Panc1 (cell line): ENCODE measurements at regions of chr16 and their contacts with region 1.

Region 1: GRCh38 chr16:84294531-84295142 is at the start of gene WFDC1:
- DNase-seq: no peak
- ATAC-seq: peak; percentile 72; the same call in 1 of the 2 replicates
- H3K4me3 ChIP-seq: peak within 1 kb of the TSS in 1 of 2 experiments; percentile 24; a peak in 1 of 4 replicates
- H3K27ac ChIP-seq: no peak within 1 kb of the TSS
- H3K4me1 ChIP-seq: no peaks in the 10 kb centered on the region
- H3K27me3 ChIP-seq: no peaks in the 10 kb centered on the region
- CTCF ChIP-seq: no peak
- total RNA-seq, gene WFDC1: not detected

Region 2: GRCh38 chr16:83887081-83887480 is 407.6 kb before region 1 on chr16:
- CTCF ChIA-PET with region 1: no interaction called
- POLR2A ChIA-PET with region 1: no interaction called
- in situ Hi-C with region 1: no loop called
- intact Hi-C with region 1: no loop called
- DNase-seq: no peak
- ATAC-seq: no peak
- H3K4me3 ChIP-seq: no peak overlapping the region
- H3K27ac ChIP-seq: no peak overlapping the region
- H3K4me1 ChIP-seq: no peaks in the 10 kb centered on the region
- H3K27me3 ChIP-seq: no peaks in the 10 kb centered on the region
- CTCF ChIP-seq: peak; percentile 66

Region 3: GRCh38 chr16:83974475-83974874 is 320.2 kb before region 1 on chr16:
- CTCF ChIA-PET with region 1: no interaction called
- POLR2A ChIA-PET with region 1: no interaction called
- in situ Hi-C with region 1: no loop called
- intact Hi-C with region 1: no loop called
- DNase-seq: no peak
- ATAC-seq: no peak
- H3K4me3 ChIP-seq: no peak overlapping the region
- H3K27ac ChIP-seq: no peak overlapping the region
- H3K4me1 ChIP-seq: no peaks in the 10 kb centered on the region
- H3K27me3 ChIP-seq: no peaks in the 10 kb centered on the region
- CTCF ChIP-seq: no peak

Region 4: DNA sequence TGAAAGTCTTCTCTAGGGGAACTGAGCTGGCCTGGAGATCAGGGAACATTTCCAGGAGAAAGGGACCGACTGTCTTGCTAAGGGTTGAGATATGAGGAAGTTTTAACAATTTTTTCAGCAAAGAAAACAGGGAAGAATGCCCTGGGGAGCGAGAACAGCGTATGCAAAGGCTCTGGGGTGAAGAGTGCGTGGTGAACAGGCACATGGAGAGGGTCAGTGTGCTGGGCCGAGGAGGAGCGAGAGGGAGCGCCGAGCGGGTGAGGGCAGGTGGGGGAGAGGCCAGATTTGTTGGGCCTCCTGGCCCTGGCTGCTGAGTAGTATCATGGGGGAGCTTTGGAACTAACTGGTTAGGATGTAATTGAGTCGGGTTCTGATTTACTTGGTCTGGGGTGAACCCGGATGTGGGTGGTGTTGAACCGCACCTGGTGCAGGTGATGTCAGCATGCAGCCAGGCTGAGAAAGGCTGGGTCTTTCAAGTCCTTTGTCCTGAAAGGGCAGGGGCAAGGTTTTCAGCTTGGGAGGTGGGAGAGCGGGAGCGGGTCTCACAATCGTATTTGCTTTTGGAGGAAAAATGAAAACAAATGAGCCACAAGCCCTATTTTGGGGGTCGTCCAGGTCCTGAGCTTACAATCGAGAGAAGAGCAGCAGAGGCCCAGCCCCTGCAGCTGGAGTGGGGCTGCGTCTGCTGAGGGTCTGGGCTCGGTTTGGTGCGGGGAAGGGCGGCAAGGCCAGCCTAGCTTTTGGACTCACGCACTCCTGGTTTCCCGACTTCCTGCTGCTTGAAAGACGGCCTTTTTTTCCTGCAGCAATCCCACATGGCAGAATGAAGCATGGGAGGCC is 11.1 kb before region 1 on chr16:
- CTCF ChIA-PET with region 1: interaction called, 17 read pairs
- POLR2A ChIA-PET with region 1: no interaction called
- in situ Hi-C with region 1: no loop called
- intact Hi-C with region 1: no loop called
- DNase-seq: no peak
- ATAC-seq: no peak
- H3K4me3 ChIP-seq: no peak overlapping the region
- H3K27ac ChIP-seq: no peak overlapping the region
- H3K4me1 ChIP-seq: no peaks in the 10 kb centered on the region
- H3K27me3 ChIP-seq: no peaks in the 10 kb centered on the region; the same call in 1 of the 2 replicates
- CTCF ChIP-seq: no peak

Region 5: GRCh38 chr16:84406006-84406963 is 111.6 kb after region 1 on chr16:
- CTCF ChIA-PET with region 1: no interaction called
- POLR2A ChIA-PET with region 1: no interaction called
- in situ Hi-C with region 1: no loop called
- intact Hi-C with region 1: no loop called
- DNase-seq: no peak
- ATAC-seq: no peak
- H3K4me3 ChIP-seq: no peak overlapping the region
- H3K27ac ChIP-seq: no peak overlapping the region
- H3K4me1 ChIP-seq: no peaks in the 10 kb centered on the region
- H3K27me3 ChIP-seq: peaks cover 5% of the 10 kb centered on the region
- CTCF ChIP-seq: no peak

Region 6: DNA sequence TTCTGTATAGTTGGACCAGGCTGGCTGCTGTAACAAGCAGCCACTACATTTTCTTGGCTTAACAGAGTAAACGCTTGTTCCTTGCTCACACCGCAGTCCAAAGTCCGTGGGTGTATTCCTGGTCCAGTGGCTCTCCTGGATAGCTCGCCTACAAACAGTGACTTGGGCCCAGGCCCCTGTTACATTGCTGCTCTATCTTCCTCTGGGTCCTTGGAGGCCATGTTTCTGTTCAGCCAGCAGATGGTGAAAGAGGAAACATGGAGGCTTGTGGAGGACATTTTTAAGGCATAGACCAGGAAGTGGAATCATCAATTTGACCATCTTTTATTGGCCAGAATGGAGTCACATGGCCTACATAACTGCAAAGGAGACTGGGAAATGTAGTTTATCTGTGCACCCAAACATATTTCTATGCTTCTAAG is 128.8 kb after region 1 on chr16:
- CTCF ChIA-PET with region 1: interaction called, 15 read pairs
- POLR2A ChIA-PET with region 1: no interaction called
- in situ Hi-C with region 1: no loop called
- intact Hi-C with region 1: no loop called
- DNase-seq: no peak
- ATAC-seq: peak; percentile 60
- H3K4me3 ChIP-seq: no peak overlapping the region
- H3K27ac ChIP-seq: no peak overlapping the region
- H3K4me1 ChIP-seq: no peaks in the 10 kb centered on the region
- H3K27me3 ChIP-seq: no peaks in the 10 kb centered on the region
- CTCF ChIP-seq: no peak